ENCODE measurements at regions of chr11 and their contacts with region 1.

Region 1: GRCh38 chr11:19561011-19561410 is 151.6 kb upstream of the NAV2 start:
- DNase-seq: no peak
- ATAC-seq: no peak

Region 2: GRCh38 chr11:19742588-19743292 is 181.7 kb after region 1 on chr11:
- intact Hi-C with region 1: loop called (anchors 2 kb)
- DNase-seq: peak; percentile 86
- ATAC-seq: peak; percentile 91

Region 3: GRCh38 chr11:19800162-19800561 is 239.2 kb after region 1 on chr11:
- intact Hi-C with region 1: loop called (anchors 5 kb)
- DNase-seq: no peak
- ATAC-seq: peak; percentile 34

Region 4: DNA sequence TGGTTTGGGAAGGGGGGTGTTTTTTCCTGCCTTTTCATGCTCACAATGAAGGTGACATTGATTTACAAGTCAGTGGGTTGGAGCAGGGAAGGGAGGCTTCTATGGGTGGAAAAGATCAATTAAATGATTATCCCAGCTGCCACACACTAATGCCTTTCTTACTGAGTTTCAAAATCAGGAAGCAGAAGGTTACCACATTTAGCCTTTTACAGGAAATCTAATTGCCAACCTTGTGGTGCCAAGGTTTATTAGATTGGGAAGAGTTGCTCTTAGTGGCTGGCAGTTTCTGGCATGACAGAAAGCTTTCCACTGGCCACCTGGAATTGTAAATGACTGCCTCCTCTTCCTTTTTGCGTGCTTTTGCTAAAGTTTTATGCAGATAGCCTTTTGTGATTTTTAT is 250.4 kb after region 1 on chr11:
- intact Hi-C with region 1: no loop called
- DNase-seq: no peak
- ATAC-seq: no peak